SK-N-SH (cell line): ENCODE measurements at regions of chr19 and their contacts with region 1.

Region 1: GRCh38 chr19:39474139-39474622 is 6.5 kb upstream of the TIMM50 start:
- DNase-seq: peak; percentile 91
- H3K4me3 ChIP-seq: peak overlapping the region in 1 of 2 experiments; percentile 51; a peak in 1 of 4 replicates
- H3K27ac ChIP-seq: no peak overlapping the region
- H3K4me1 ChIP-seq: no peaks in the 10 kb centered on the region
- H3K27me3 ChIP-seq: no peaks in the 10 kb centered on the region
- CTCF ChIP-seq: peak; percentile 83
- EP300 ChIP-seq: no peak
- RAD21 ChIP-seq: peak; percentile 55

Region 2: DNA sequence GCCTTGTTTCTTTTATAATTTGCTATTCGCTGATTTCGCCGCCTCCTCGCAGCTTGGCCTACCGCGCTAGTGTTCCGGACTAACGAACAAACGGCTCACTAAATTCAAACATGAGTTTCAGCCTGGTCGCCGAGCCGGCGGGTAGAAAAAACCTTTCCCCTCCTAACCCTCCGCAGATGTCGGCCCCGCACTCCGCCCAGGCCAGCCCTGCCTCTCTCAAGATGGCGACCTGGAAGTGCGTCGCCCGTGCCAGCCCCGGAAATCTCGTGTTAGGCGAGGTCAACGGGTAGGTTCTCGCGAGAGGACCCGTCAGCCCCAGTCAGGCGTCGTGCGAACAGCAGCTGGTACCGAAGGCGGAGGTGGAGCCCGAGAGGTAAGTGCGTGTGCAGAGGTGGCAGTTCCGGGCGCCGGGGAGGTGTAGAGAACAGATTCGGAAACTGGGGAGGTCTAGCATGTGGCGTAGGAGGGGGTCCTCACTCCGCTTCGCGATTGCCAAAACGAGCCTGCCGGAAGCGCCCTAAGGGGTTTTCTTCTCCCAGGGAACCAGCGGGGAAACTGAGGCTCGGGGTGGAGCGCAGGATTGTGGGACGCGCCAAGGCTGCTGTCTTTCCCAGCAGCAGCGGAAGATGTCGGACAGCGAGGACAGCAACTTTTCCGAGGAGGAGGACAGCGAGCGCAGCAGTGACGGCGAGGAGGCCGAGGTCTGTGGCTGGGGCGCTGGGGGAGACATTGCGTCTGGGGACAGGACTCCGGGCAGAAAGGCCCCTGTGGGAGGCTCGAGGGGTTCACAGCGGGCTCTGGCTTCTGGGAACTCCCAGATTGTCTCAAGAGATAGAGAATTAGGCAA is 28.7 kb before region 1 on chr19 and contains the start of gene SUPT5H:
- CTCF ChIA-PET with region 1: interaction called, 17 read pairs
- POLR2A ChIA-PET with region 1: interaction called, 3 read pairs
- DNase-seq: peak; percentile 96
- H3K4me3 ChIP-seq: peak within 1 kb of the TSS; percentile 71 to 93
- H3K27ac ChIP-seq: peak within 1 kb of the TSS; percentile 83 to 96
- H3K4me1 ChIP-seq: peaks cover 4 to 12% of the 10 kb centered on the region in 2 experiments; a peak in 3 of 4 replicates
- H3K27me3 ChIP-seq: no peaks in the 10 kb centered on the region
- CTCF ChIP-seq: no peak
- EP300 ChIP-seq: no peak
- RAD21 ChIP-seq: no peak
- polyA plus RNA-seq, gene SUPT5H: 115 and 137 TPM in 2 replicates

Region 3: DNA sequence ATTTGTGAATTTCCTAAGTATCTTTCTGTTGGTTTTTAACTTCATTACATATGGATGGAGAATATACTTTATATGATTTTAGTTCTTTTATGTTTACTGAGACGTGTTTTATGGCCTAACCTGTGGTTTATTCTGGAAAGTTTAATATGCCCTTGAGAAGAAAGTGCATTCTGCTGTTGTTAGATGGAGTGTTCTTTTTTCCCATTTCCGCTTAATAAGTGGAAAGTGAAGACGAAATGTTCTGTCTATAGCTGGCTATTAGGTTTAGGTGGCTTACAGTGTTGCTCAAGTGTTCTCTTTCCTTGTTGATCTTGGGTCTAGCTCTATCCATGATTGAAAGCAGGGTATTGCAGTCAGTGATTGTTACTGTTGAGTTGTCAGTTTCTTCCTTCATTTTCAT is 10.8 kb before region 1 on chr19:
- CTCF ChIA-PET with region 1: interaction called, 17 read pairs
- POLR2A ChIA-PET with region 1: no interaction called
- DNase-seq: no peak
- H3K4me3 ChIP-seq: no peak overlapping the region
- H3K27ac ChIP-seq: no peak overlapping the region
- H3K4me1 ChIP-seq: no peaks in the 10 kb centered on the region
- H3K27me3 ChIP-seq: no peaks in the 10 kb centered on the region
- CTCF ChIP-seq: no peak
- EP300 ChIP-seq: no peak
- RAD21 ChIP-seq: no peak

Region 4: GRCh38 chr19:39497996-39498797 is 24.0 kb after region 1 on chr19:
- CTCF ChIA-PET with region 1: interaction called, 13 read pairs
- POLR2A ChIA-PET with region 1: no interaction called
- DNase-seq: peak; percentile 88
- H3K4me3 ChIP-seq: peak overlapping the region in 1 of 2 experiments; percentile 20; a peak in 2 of 4 replicates
- H3K27ac ChIP-seq: peak overlapping the region in 1 of 2 experiments; percentile 40; a peak in 1 of 4 replicates
- H3K4me1 ChIP-seq: peaks cover 0 to 9% of the 10 kb centered on the region in 2 experiments; a peak in 1 of 4 replicates
- H3K27me3 ChIP-seq: no peaks in the 10 kb centered on the region; the same call in 1 of the 2 replicates
- CTCF ChIP-seq: peak; percentile 47
- EP300 ChIP-seq: no peak
- RAD21 ChIP-seq: peak; percentile 65

Region 5: DNA sequence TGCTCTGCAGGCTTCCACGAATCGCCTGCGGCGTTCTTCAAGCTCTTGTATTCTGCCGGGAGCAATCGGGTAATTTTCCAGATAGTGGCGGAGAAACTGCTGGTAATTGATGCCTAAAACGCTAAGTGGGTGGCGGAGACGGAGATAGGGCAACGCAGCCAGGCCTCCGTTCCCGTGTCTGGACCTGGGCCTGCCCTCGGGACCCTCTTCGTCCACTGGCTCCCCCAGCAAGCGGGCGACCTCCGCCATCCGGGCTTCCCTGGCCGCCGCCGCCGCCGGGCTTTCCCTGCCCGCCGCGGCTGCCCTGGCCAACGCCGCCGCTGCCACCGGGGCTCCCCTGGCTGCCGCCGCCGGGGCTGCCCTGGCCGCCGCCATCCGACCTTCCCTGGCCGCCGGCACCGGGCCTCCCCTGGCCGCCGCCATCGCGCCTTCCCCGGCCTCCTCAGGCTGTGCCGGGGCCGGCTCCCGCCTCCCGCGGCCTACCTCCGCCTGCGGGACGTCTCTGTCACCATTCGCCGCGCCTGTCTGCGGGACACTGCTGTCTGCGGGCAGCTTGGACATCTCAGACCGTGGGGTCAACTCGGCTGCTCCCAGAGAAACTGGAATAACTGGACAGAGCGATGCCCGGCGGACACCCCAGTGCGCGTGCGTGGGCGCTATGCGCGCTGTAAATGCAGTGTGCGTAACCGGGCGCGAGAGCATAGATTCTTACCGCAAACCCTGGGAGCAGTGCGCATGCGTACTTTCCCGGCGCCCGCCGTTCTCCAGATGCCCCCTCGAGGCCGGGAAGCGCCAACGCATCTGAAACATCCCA is 65.5 kb after region 1 on chr19 and contains the start of gene EID2:
- CTCF ChIA-PET with region 1: interaction called, 96 read pairs
- POLR2A ChIA-PET with region 1: no interaction called
- DNase-seq: peak; percentile 97
- H3K4me3 ChIP-seq: peak within 1 kb of the TSS; percentile 77 to 88
- H3K27ac ChIP-seq: peak within 1 kb of the TSS; percentile 84 to 89
- H3K4me1 ChIP-seq: peaks cover 3 to 7% of the 10 kb centered on the region in 2 experiments; a peak in 2 of 4 replicates
- H3K27me3 ChIP-seq: no peaks in the 10 kb centered on the region; the same call in 1 of the 2 replicates
- CTCF ChIP-seq: peak; percentile 70
- EP300 ChIP-seq: no peak
- RAD21 ChIP-seq: peak; percentile 62
- polyA plus RNA-seq, gene EID2: 13.9 and 14.1 TPM in 2 replicates